Endothelial cell of umbilical vein (primary cell): ENCODE measurements at regions of chr18 and their contacts with region 1.

Region 1: GRCh38 chr18:70205421-70206397 is at the start of gene RTTN:
- DNase-seq: peak; percentile 96
- H3K4me3 ChIP-seq: peak within 1 kb of the TSS; percentile 89 to 96 (median 95)
- H3K27ac ChIP-seq: peak within 1 kb of the TSS; percentile 87
- H3K4me1 ChIP-seq: peaks cover 8% of the 10 kb centered on the region
- H3K27me3 ChIP-seq: peaks cover 0 to 9% of the 10 kb centered on the region in 2 experiments
- CTCF ChIP-seq: no peak
- POLR2A ChIP-seq: no peak
- total RNA-seq, gene RTTN: 16.7 and 17.4 TPM in 2 replicates

Region 2: DNA sequence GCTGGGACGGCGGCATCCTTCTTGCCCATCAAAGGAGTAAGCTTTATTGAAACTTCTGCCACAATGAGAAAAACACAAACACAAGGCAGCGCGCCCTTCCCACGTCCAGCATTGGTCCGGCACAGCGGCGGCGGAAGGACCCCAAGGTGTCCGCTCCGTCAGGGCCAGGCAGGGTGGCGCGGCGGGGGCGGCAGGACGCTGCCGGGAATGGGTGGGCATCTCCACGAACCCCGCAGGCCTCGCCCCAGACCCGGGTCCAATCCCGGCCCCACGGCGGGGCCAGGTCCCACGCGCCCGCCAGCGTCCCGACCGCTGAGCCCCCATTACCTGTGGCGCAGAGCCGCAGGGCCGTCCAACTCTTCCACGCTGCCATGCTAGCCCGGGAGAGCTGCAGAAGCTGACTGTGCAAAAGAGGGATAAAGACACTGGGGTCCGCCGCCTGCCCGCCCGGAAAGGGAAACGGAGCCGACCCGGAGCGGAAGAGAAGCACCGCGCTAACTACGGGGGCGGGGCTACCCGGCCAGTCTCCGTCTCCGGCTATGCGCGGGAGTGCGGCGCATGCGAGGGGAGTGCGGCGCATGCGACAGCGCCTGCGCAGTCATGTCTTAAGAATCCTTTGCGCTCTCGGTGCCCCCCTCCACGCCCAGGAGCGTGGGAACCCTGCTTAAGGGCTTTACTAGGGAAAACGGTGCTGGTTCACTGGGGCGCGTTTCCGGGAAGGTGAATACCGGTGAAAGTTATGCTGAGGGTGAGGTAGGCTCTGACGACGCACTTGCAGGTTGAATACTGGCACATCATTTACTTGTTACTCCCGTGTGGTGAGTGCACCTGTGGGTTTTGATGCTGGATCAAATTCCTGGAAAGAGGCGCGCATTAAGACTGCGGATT is 1490.9 kb before region 1 on chr18 and contains the start of gene TMX3:
- CTCF ChIA-PET with region 1: no interaction called
- POLR2A ChIA-PET with region 1: no interaction called
- dilution Hi-C with region 1: no loop called
- intact Hi-C with region 1: loop called (anchors 1 kb)
- DNase-seq: peak; percentile 96
- H3K4me3 ChIP-seq: peak within 1 kb of the TSS; percentile 60 to 90 (median 80)
- H3K27ac ChIP-seq: peak within 1 kb of the TSS; percentile 47
- H3K4me1 ChIP-seq: peaks cover 16% of the 10 kb centered on the region
- H3K27me3 ChIP-seq: no peaks in the 10 kb centered on the region
- CTCF ChIP-seq: no peak
- POLR2A ChIP-seq: peak; percentile 77
- total RNA-seq, gene TMX3: 65.5 and 69.7 TPM in 2 replicates

Region 3: GRCh38 chr18:69898241-69898861 is 307.4 kb before region 1 on chr18:
- CTCF ChIA-PET with region 1: no interaction called
- POLR2A ChIA-PET with region 1: no interaction called
- dilution Hi-C with region 1: no loop called
- intact Hi-C with region 1: no loop called
- DNase-seq: no peak
- H3K4me3 ChIP-seq: no peak overlapping the region
- H3K27ac ChIP-seq: no peak overlapping the region
- H3K4me1 ChIP-seq: no peaks in the 10 kb centered on the region
- H3K27me3 ChIP-seq: no peaks in the 10 kb centered on the region
- CTCF ChIP-seq: no peak
- POLR2A ChIP-seq: no peak

Region 4: DNA sequence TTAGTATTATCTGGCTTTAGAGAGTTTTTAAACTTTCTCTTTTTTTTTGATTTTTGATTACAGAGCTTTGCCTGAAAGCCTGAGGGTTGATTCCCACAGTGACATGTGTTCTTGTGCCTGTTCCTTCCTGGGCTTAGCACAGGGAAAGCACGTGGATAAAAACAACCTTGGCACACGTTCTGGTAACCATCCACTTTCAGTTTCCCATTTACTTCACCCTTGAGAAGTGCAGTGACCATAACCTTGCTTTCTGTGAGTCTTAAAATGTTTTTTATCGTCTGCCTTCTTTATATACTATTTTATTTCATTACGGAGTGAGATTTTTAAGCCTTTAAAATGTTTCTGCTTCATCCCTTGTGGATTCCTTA is 269.5 kb before region 1 on chr18:
- CTCF ChIA-PET with region 1: no interaction called
- POLR2A ChIA-PET with region 1: no interaction called
- dilution Hi-C with region 1: no loop called
- intact Hi-C with region 1: no loop called
- DNase-seq: no peak
- H3K4me3 ChIP-seq: no peak overlapping the region
- H3K27ac ChIP-seq: no peak overlapping the region
- H3K4me1 ChIP-seq: no peaks in the 10 kb centered on the region
- H3K27me3 ChIP-seq: no peaks in the 10 kb centered on the region
- CTCF ChIP-seq: no peak
- POLR2A ChIP-seq: no peak

Region 5: GRCh38 chr18:70288851-70289328 is 83.2 kb after region 1 on chr18 and contains the start of gene SOCS6:
- CTCF ChIA-PET with region 1: interaction called, 3 read pairs
- POLR2A ChIA-PET with region 1: no interaction called
- dilution Hi-C with region 1: no loop called
- intact Hi-C with region 1: loop called (anchors 1 kb)
- DNase-seq: peak; percentile 60
- H3K4me3 ChIP-seq: peak within 1 kb of the TSS; percentile 79 to 98 (median 90)
- H3K27ac ChIP-seq: peak within 1 kb of the TSS; percentile 73
- H3K4me1 ChIP-seq: peaks cover 22% of the 10 kb centered on the region
- H3K27me3 ChIP-seq: no peaks in the 10 kb centered on the region
- CTCF ChIP-seq: no peak
- POLR2A ChIP-seq: peak; percentile 75
- total RNA-seq, gene SOCS6: 13.2 and 15.0 TPM in 2 replicates